Heart left ventricle (tissue), 16 donors: ENCODE measurements at regions of chr9 and their contacts with region 1.

Region 1: GRCh38 chr9:2336055-2336454 is 285.5 kb upstream of the VLDLR start:
- DNase-seq: no peak
- ATAC-seq: no peak
- H3K4me3 ChIP-seq: no peak overlapping the region
- H3K27ac ChIP-seq: no peak overlapping the region
- H3K4me1 ChIP-seq: peaks cover 0 to 31% (median 1%) of the 10 kb centered on the region in 12 donors
- H3K27me3 ChIP-seq: no peaks in the 10 kb centered on the region
- CTCF ChIP-seq: peak in 8 of 12 donors; percentile 11 to 49 (median 32)
- POLR2A ChIP-seq: no peak

Region 2: DNA sequence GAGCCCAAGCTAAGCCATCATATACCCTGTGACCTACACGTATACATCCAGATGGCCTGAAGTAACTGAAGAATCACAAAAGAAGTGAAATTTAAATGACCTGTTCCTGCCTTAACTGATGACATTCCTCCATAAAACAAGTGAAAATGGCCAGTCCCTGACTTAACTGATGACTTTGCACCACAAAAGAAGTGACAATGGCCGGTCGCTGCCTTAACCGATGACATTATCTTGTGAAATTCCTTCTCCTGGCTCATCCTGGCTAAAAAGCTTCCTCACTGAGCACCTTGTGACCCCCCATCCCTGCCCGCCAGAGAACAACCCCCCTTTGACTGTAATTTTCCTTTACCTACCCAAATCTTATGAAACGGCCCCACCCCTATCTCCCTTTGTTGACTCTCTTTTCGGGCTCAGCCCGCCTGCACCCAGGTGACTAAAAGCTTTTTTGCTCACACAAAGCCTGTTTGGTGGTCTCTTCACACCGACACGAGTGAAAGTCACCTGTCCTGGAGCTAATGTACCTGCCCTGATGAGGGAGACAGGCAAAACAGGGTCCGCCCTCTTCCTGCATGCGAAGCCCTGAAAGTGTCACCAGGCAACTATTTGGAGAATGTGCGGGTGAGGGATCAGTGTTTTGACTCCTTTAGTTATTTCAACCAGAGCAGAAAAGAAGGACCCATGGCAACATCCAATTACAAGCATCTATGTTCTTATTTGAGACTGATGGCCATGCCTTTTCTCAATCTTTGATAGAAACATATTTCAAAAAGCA is 54.8 kb before region 1 on chr9:
- intact Hi-C with region 1: no loop called
- DNase-seq: no peak
- ATAC-seq: no peak
- H3K4me3 ChIP-seq: no peak overlapping the region
- H3K27ac ChIP-seq: no peak overlapping the region
- H3K4me1 ChIP-seq: no peaks in the 10 kb centered on the region
- H3K27me3 ChIP-seq: no peaks in the 10 kb centered on the region
- CTCF ChIP-seq: no peak
- POLR2A ChIP-seq: no peak

Region 3: DNA sequence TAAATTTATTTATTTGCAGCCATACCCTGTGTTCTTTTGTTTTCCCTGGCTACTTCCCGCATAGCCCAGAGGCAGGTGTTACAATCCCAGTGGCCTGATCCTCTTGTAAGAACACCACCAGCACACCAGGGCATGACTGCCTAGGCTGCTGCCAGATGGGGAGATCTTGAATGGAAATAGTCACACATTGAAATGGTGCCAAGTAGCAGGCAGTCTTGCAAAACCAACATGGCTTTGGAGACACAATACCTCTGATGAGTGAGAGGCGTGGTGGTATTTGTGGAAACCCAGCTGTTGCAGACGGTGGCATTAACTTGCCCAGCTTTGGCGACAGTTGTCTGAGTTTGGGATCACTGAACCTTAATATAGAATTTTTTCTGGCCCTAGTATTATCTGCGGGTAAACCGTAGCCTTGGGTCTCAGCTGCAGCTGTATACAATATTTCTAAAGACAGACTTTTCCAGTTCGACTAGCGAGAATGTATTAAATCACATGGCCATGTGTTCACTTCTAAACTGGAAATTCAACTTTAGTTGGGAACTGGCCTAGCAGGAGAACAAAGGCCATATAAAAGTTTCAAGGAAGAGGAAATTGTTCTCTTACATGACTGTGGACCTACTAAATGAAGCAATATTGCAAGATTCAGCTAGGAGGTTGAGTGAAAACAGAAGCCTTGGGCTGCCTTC is 43.9 kb before region 1 on chr9:
- intact Hi-C with region 1: no loop called
- DNase-seq: peak in 1 of 5 donors; percentile 37
- ATAC-seq: peak in 2 of 4 donors; percentile 42 to 60
- H3K4me3 ChIP-seq: no peak overlapping the region
- H3K27ac ChIP-seq: no peak overlapping the region
- H3K4me1 ChIP-seq: no peaks in the 10 kb centered on the region
- H3K27me3 ChIP-seq: no peaks in the 10 kb centered on the region
- CTCF ChIP-seq: no peak
- POLR2A ChIP-seq: no peak

Region 4: DNA sequence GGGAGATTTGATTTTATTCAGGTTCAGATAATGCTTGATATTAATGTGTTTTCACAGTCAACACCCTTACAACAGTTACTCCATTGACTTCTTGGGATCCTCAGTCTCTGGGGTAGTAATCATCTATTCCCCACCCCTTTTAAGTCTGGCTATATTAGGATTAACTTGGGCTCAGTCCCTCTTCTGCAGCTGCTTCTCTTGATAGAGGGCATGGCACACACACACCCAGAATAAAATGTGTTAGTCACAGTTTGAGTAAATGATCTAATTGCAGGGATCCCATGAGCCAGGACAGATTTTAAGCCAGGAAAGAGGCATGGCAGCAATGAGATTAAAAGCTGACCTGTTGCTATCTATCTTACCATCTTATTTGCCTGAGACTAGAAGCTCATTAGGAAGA is 231.9 kb after region 1 on chr9:
- intact Hi-C with region 1: no loop called
- DNase-seq: peak in 1 of 5 donors; percentile 18
- ATAC-seq: peak; percentile 23 to 54 (median 38)
- H3K4me3 ChIP-seq: no peak overlapping the region
- H3K27ac ChIP-seq: peak overlapping the region in 11 of 12 donors; percentile 20 to 88 (median 62)
- H3K4me1 ChIP-seq: peaks cover 5 to 59% (median 32%) of the 10 kb centered on the region in 12 donors
- H3K27me3 ChIP-seq: no peaks in the 10 kb centered on the region
- CTCF ChIP-seq: no peak
- POLR2A ChIP-seq: no peak

Region 5: DNA sequence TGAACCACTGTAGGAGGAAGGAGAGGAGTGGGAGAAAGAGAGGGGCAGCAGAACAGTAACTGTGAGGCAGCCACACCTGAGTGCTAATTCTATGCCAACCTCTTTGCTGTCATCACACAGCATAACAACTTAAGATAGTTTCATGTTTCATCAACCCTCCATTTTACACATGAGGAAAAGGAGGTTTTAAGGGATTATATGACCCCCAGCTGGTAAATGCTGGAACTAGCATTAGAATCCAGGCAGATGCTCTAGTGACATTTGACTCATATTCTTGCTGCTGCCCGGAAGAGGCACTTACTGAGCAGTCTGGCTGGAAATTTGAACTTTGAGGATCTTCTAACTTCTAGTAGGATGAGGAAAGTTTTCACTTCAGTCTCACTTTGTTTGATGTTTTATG is 261.4 kb after region 1 on chr9:
- intact Hi-C with region 1: loop called in 1 of 10 experiments (anchors 10 kb)
- DNase-seq: no peak
- ATAC-seq: no peak
- H3K4me3 ChIP-seq: no peak overlapping the region
- H3K27ac ChIP-seq: no peak overlapping the region
- H3K4me1 ChIP-seq: peaks cover 0 to 7% (median 1%) of the 10 kb centered on the region in 12 donors
- H3K27me3 ChIP-seq: no peaks in the 10 kb centered on the region
- CTCF ChIP-seq: peak in 1 of 12 donors; percentile 6
- POLR2A ChIP-seq: no peak

Region 6: GRCh38 chr9:2638871-2639673 is 303.0 kb after region 1 on chr9:
- intact Hi-C with region 1: loop called in 1 of 10 experiments (anchors 10 kb)
- DNase-seq: no peak
- ATAC-seq: no peak
- H3K4me3 ChIP-seq: no peak overlapping the region
- H3K27ac ChIP-seq: no peak overlapping the region
- H3K4me1 ChIP-seq: peaks cover 0 to 32% (median 10%) of the 10 kb centered on the region in 12 donors
- H3K27me3 ChIP-seq: no peaks in the 10 kb centered on the region
- CTCF ChIP-seq: no peak
- POLR2A ChIP-seq: no peak